Activated CD4-positive, alpha-beta T cell treated with anti-CD3 and anti-CD28 coated beads for 36 hours (primary cell): ENCODE measurements at regions of chr2 and their contacts with region 1.

Region 1: GRCh38 chr2:209619782-209620181 is 151.8 kb upstream of the UNC80 start:
- DNase-seq: no peak
- ATAC-seq: no peak
- H3K4me3 Mint-ChIP-seq: no peak overlapping the region
- H3K27ac Mint-ChIP-seq: no peak overlapping the region
- H3K4me1 Mint-ChIP-seq: no peaks in the 10 kb centered on the region
- H3K27me3 Mint-ChIP-seq: peaks cover 8% of the 10 kb centered on the region

Region 2: DNA sequence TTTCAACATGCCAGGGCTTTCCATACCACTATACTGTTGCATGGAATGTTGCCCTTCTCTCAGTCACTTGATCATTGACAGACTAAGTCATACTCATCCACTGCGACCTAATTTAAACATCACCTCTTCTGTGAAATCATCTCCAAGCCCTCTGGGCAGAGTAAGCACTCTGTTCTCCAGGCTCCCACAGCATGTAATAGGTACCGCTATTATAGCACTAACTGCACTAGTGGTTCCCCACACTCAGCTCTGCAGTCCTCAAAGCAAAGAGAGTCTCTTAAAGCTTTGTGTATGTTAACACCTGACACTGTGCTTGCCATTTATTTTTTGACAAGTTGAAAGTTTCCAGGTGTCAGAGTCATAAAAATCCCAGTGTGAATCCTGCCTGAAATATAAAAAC is 1971.6 kb after region 1 on chr2:
- CTCF ChIA-PET with region 1: no interaction called
- POLR2A ChIA-PET with region 1: no interaction called
- intact Hi-C with region 1: loop called in 1 of 2 experiments (anchors 10 kb)
- DNase-seq: no peak
- ATAC-seq: no peak
- H3K4me3 Mint-ChIP-seq: no peak overlapping the region
- H3K27ac Mint-ChIP-seq: no peak overlapping the region
- H3K4me1 Mint-ChIP-seq: no peaks in the 10 kb centered on the region
- H3K27me3 Mint-ChIP-seq: no peaks in the 10 kb centered on the region